Endothelial cell of umbilical vein (primary cell): ENCODE measurements at regions of chr3 and their contacts with region 1.

Region 1: GRCh38 chr3:49428697-49429100 is 425 bp downstream of the NICN1 start:
- DNase-seq: no peak
- H3K4me3 ChIP-seq: peak overlapping the region in 2 of 3 experiments; percentile 75 to 92
- H3K27ac ChIP-seq: no peak overlapping the region
- H3K4me1 ChIP-seq: peaks cover 3% of the 10 kb centered on the region
- H3K27me3 ChIP-seq: no peaks in the 10 kb centered on the region
- CTCF ChIP-seq: no peak
- POLR2A ChIP-seq: no peak

Region 2: DNA sequence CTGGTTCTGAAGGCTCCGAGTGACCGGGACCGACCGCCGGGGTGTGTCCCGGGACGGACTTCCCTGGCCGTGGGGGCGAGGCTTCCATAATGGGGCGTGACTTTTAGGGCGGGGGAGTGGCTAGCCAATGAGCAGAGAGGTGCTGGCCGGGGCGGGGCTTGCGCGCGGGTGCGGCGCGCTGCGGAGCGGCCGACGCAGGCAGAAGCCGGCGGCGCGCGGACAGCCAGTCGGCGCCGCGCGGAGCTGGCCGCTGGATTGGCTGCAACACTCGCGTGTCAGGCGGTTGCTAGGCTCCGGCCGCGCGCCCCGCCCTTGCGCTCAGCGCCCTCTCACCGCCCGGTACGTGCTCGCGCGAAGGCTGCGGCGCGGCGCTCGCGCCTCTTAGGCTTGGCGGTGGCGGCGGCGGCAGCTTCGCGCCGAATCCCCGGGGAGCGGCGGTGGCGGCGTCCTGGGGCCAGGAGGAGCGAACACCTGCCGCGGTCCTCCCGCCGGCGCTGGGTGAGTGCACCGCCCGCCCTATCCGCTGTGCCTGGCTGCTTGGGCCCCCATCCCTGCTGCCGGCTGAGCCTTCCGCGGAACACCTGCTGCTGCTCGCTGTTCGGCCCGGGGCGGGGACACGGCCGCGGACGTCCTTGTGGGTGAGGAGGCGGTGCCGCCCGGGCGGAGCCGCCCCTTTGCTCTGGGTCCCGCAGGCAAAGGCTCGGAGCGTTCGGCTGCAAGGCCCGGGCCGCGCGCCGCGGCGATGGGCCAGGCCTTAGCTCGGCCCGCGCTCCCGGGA is 41.4 kb after region 1 on chr3 and contains the start of gene DAG1:
- CTCF ChIA-PET with region 1: no interaction called
- POLR2A ChIA-PET with region 1: no interaction called
- dilution Hi-C with region 1: no loop called
- intact Hi-C with region 1: loop called (anchors 1 kb)
- DNase-seq: peak; percentile 97
- H3K4me3 ChIP-seq: peak within 1 kb of the TSS; percentile 52 to 92 (median 81)
- H3K27ac ChIP-seq: peak within 1 kb of the TSS; percentile 61
- H3K4me1 ChIP-seq: peaks cover 17% of the 10 kb centered on the region
- H3K27me3 ChIP-seq: no peaks in the 10 kb centered on the region
- CTCF ChIP-seq: no peak
- POLR2A ChIP-seq: peak; percentile 81
- total RNA-seq, gene DAG1: 88.0 and 97.5 TPM in 2 replicates